ENCODE measurements at regions of chr5 and their contacts with region 1.

Region 1: GRCh38 chr5:115098041-115098702 is 71.5 kb downstream of the TRIM36 start:
- DNase-seq: peak in 1 of 2 donors; percentile 62
- ATAC-seq: peak; percentile 74 to 79 (median 74)
- H3K4me3 ChIP-seq: no peak overlapping the region
- H3K4me3 Mint-ChIP-seq: no peak overlapping the region
- H3K27ac ChIP-seq: no peak overlapping the region
- H3K27ac Mint-ChIP-seq: no peak overlapping the region
- H3K4me1 ChIP-seq: no peaks in the 10 kb centered on the region
- H3K4me1 Mint-ChIP-seq: no peaks in the 10 kb centered on the region
- H3K27me3 ChIP-seq: no peaks in the 10 kb centered on the region
- H3K27me3 Mint-ChIP-seq: peaks cover 9 to 10% of the 10 kb centered on the region in 2 donors
- CTCF ChIP-seq: peak; percentile 65

Region 2: GRCh38 chr5:115246361-115246991 is 148.3 kb after region 1 on chr5:
- intact Hi-C with region 1: loop called (anchors 1 kb)
- DNase-seq: peak in 1 of 2 donors; percentile 60
- ATAC-seq: peak; percentile 64 to 77 (median 72)
- H3K4me3 ChIP-seq: no peak overlapping the region
- H3K4me3 Mint-ChIP-seq: no peak overlapping the region
- H3K27ac ChIP-seq: no peak overlapping the region
- H3K27ac Mint-ChIP-seq: no peak overlapping the region
- H3K4me1 ChIP-seq: no peaks in the 10 kb centered on the region
- H3K4me1 Mint-ChIP-seq: peaks cover 31 to 40% of the 10 kb centered on the region in 2 donors
- H3K27me3 ChIP-seq: no peaks in the 10 kb centered on the region
- H3K27me3 Mint-ChIP-seq: no peaks in the 10 kb centered on the region
- CTCF ChIP-seq: peak; percentile 90

Region 3: DNA sequence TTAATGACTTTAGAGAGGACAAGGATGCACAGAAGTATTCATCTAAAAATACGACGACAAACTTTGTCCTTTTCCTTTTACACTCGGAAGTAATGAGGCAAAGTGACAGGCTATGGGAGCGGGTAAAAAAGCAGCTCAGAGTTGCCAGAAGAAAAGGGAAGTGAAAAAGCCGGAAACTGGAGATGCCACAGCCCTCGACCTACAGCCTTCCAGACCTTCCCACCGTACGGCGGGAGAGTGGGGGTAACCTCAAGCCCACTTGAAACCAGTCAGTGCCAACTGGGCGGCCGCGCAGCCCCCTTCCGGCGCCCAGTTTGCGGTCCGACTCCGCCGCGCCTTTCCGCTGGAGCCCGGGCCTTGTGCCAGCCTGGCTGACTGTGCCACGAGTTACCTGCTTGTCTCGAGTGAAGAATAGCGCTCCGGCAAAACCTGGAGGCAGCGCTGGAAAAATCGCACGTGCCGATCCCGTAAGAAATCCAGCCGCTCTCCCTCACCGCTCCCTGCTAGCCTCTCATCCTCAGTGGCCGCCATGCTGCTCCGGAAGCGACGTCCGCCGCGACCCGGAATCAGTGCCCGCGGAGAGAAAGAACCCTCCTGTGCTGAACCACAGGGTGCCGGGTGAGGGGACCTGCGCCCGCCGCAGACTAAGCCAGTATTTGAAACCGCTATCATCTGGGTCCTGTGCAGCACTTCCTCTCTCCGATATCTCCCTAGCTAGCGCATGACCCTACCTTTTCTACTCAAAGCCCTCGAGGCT is 164.3 kb after region 1 on chr5 and contains the start of gene PGGT1B:
- intact Hi-C with region 1: loop called (anchors 5 kb)
- DNase-seq: peak; percentile 58 to 80
- ATAC-seq: peak; percentile 90 to 94 (median 93)
- H3K4me3 ChIP-seq: peak within 1 kb of the TSS; percentile 99
- H3K4me3 Mint-ChIP-seq: peak within 1 kb of the TSS; percentile 92
- H3K27ac ChIP-seq: peak within 1 kb of the TSS; percentile 94
- H3K27ac Mint-ChIP-seq: peak within 1 kb of the TSS; percentile 91 to 94
- H3K4me1 ChIP-seq: peaks cover 8% of the 10 kb centered on the region
- H3K4me1 Mint-ChIP-seq: peaks cover 50 to 52% of the 10 kb centered on the region in 2 donors
- H3K27me3 ChIP-seq: no peaks in the 10 kb centered on the region
- H3K27me3 Mint-ChIP-seq: no peaks in the 10 kb centered on the region
- CTCF ChIP-seq: no peak
- total RNA-seq, gene PGGT1B: 39.5 to 60.1 (median 46.1) TPM

Region 4: DNA sequence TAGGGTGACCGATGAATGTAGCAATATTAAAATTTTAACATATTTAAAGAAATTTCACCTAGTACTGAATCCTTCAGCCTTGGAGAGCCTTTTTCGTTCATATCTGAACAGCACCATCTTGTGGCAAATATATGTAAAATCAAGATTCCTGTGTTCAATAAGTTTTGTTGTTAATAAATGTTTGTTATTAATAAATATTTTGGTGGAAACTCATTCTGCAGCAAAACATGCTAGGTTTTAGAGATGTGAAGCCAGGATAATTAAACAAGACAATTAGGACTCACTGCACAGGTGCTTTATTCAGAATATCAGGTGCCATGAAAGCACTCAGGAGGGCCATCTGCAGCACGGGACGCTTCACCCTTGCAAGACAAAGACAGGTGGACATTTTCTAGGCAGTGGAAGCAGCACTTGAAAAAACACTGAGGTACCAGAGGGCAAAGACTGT is 488.5 kb after region 1 on chr5:
- intact Hi-C with region 1: loop called (anchors 5 kb)
- DNase-seq: peak in 1 of 2 donors; percentile 54
- ATAC-seq: peak; percentile 44 to 53 (median 52)
- H3K4me3 ChIP-seq: no peak overlapping the region
- H3K4me3 Mint-ChIP-seq: no peak overlapping the region
- H3K27ac ChIP-seq: no peak overlapping the region
- H3K27ac Mint-ChIP-seq: no peak overlapping the region
- H3K4me1 ChIP-seq: no peaks in the 10 kb centered on the region
- H3K4me1 Mint-ChIP-seq: no peaks in the 10 kb centered on the region
- H3K27me3 ChIP-seq: no peaks in the 10 kb centered on the region
- H3K27me3 Mint-ChIP-seq: no peaks in the 10 kb centered on the region
- CTCF ChIP-seq: peak; percentile 71